Activated T-helper 2 cell treated with anti-CD3 and anti-CD28 coated beads, Interferon-gamma antibody, Interleukin-2, Interleukin-4, amounts not matched to agents 10 μg/mL and 5 μg/mL and 100 μg/mL, durations not matched to agents 14 hours and 24 hours and 36 hours (primary cell): ENCODE measurements at regions of chr10 and their contacts with region 1.

Region 1: DNA sequence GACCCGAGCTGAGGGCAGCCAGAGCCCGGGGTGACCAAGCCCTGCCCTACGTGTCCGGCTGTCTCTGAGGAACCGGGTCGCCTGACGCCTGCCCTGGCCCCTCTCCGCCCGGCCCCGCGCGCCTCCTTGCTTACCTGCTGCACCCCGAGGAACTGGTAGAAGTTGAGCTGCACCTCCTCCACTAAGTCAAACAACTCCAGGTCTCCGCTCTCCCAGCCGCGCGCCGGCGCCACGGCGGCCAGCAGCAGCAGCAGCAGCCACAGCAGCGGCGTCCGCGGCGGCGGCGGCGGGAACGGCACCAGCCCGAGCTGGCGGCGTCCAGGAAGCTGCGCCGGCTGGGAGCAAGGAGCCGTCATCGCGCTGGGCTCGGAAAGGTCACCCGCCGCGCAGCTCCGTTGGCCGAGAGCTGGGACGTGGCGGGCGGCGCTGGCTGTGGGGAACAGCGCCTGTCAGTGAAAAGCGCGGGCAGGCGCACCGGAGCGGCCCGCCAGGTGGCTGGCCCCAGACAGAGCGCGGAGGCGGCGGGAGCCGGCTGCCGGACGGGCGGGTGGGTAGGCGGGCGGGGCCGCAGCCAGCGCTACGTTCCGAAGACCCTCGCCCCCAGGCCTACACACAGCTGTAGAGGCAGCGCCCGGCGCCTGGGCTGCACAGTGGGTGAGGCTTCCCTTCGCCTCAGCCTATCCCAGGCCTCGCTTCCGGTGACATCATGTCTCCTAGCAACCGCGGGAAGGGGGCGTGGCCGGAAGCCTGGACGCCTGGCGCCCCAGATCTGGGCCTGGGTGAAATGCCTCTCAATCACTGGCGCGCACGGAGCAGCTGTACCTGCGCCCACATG is at the start of gene DNAJC1:
- DNase-seq: peak; percentile 96
- H3K4me3 Mint-ChIP-seq: peak within 1 kb of the TSS; percentile 96
- H3K27ac Mint-ChIP-seq: peak within 1 kb of the TSS; percentile 91
- H3K4me1 Mint-ChIP-seq: peaks cover 34% of the 10 kb centered on the region
- H3K27me3 Mint-ChIP-seq: peaks cover 12% of the 10 kb centered on the region
- total RNA-seq, gene DNAJC1: 24.0 and 24.5 TPM in 2 replicates

Region 2: GRCh38 chr10:21517134-21518031 is 485.9 kb before region 1 on chr10:
- intact Hi-C with region 1: loop called (anchors 5 kb)
- DNase-seq: no peak
- H3K4me3 Mint-ChIP-seq: peak overlapping the region; percentile 65
- H3K27ac Mint-ChIP-seq: no peak overlapping the region
- H3K4me1 Mint-ChIP-seq: peaks cover 39% of the 10 kb centered on the region
- H3K27me3 Mint-ChIP-seq: peaks cover 64% of the 10 kb centered on the region

Region 3: DNA sequence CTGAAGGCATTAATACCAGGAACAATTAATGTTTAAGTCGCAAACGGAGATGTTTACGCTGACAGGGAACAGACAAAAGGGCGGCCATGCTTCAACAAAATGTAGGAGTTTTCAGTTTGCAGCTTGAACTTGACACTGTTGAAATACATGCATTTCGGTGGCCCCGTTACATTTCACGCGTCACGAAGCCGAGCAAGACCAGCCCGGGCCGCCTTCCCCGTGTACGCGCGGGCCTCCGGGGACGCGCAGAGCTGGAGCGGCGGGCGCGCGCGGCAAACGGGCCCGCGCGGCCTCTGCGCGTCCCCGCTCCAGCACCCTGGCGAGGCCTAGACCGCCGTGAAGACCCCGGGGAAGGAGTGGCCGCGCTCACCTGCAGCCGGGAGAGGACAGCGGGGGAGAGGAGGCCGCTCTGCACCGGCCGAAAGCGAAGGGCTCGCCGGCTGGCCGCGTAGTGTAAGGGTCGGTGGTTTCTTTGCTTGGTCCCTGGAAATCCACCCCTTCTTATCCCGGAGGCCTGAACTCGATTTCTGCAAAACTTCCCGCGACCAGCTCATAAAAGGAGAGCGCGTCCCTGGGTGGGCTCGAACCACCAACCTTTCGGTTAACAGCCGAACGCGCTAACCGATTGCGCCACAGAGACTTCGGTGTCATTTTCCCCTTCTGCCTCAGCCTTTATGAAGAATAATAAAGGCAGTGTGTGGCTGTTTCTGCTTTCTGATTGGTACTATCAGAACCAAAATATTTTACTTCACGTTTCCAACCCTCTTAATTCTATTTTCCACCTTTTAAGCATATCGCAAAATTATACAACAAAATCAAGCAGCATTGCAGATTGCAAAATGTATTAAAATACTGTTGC is 225.9 kb after region 1 on chr10:
- intact Hi-C with region 1: loop called (anchors 1 kb)
- DNase-seq: peak; percentile 82
- H3K4me3 Mint-ChIP-seq: peak overlapping the region; percentile 88
- H3K27ac Mint-ChIP-seq: peak overlapping the region; percentile 82
- H3K4me1 Mint-ChIP-seq: peaks cover 18% of the 10 kb centered on the region
- H3K27me3 Mint-ChIP-seq: peaks cover 8% of the 10 kb centered on the region

Region 4: DNA sequence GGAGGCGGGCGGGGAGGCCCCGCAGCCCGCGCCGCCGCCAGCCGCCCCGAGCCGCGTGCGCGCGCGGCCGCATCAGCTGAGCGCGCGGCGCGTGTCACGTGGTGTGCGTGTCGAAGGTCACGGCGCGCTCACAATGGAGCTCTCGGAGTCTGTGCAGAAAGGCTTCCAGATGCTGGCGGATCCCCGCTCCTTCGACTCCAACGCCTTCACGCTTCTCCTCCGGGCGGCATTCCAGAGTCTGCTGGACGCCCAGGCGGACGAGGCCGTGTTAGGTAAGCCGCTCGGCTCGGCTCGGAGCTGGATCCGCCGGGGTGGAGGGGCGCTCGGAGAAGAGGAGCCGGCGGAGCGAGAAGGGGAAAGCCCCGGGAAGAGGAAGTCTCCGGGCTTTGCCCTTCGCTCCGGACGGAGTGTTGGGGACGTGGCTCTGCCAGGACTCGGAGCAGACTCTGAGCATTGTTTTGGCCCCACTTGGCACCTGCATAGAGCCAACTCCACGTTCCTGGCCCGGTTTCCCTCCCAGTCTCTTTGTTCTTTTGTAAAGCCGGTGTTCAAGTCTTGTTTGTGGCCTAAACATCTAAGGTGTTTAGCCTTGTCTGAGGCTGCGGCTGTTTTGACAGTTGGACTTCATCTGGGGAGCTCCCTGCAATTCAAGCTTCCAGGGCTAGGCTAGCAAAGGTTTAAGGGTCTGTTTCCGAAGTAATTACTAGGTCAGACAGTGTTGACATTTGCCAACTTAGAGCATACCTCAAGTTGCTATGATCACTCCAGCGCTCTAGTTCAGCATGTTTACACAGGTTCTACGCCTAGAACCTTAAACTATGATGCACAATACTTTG is 313.2 kb after region 1 on chr10 and contains the start of gene COMMD3:
- intact Hi-C with region 1: loop called (anchors 2 kb)
- DNase-seq: peak; percentile 79
- H3K4me3 Mint-ChIP-seq: peak within 1 kb of the TSS; percentile 88
- H3K27ac Mint-ChIP-seq: peak within 1 kb of the TSS; percentile 88
- H3K4me1 Mint-ChIP-seq: peaks cover 40% of the 10 kb centered on the region
- H3K27me3 Mint-ChIP-seq: peaks cover 1% of the 10 kb centered on the region
- total RNA-seq, gene COMMD3: 92.1 and 105 TPM in 2 replicates

Region 5: GRCh38 chr10:23095404-23095965 is 1092.2 kb after region 1 on chr10 and contains the start of gene MSRB2:
- intact Hi-C with region 1: loop called (anchors 1 kb)
- DNase-seq: peak; percentile 66
- H3K4me3 Mint-ChIP-seq: peak within 1 kb of the TSS; percentile 88
- H3K27ac Mint-ChIP-seq: peak within 1 kb of the TSS; percentile 83
- H3K4me1 Mint-ChIP-seq: peaks cover 41% of the 10 kb centered on the region
- H3K27me3 Mint-ChIP-seq: peaks cover 17% of the 10 kb centered on the region
- total RNA-seq, gene MSRB2: 4.0 and 4.4 TPM in 2 replicates